ENCODE measurements at regions of chr16 and their contacts with region 1.

Region 1: GRCh38 chr16:425082-425718 is at the start of gene RAB11FIP3:
- DNase-seq: peak; percentile 67
- H3K4me3 ChIP-seq: peak within 1 kb of the TSS; percentile 54 to 82 (median 72)
- H3K27ac ChIP-seq: peak within 1 kb of the TSS; percentile 41
- H3K4me1 ChIP-seq: peaks cover 36% of the 10 kb centered on the region
- H3K27me3 ChIP-seq: no peaks in the 10 kb centered on the region
- CTCF ChIP-seq: peak in 1 of 2 donors; percentile 43
- total RNA-seq, gene RAB11FIP3: 14.2 to 30.4 TPM

Region 2: GRCh38 chr16:370443-370842 is 54.8 kb before region 1 on chr16 and contains the start of gene MRPL28:
- CTCF ChIA-PET with region 1: no interaction called
- dilution Hi-C with region 1: no loop called
- in situ Hi-C with region 1: no loop called
- intact Hi-C with region 1: no loop called
- DNase-seq: peak; percentile 92
- H3K4me3 ChIP-seq: peak within 1 kb of the TSS; percentile 28 to 50 (median 46)
- H3K27ac ChIP-seq: peak within 1 kb of the TSS; percentile 32
- H3K4me1 ChIP-seq: peaks cover 18% of the 10 kb centered on the region
- H3K27me3 ChIP-seq: no peaks in the 10 kb centered on the region
- CTCF ChIP-seq: no peak
- total RNA-seq, gene MRPL28: 49.8 to 83.9 TPM

Region 3: GRCh38 chr16:401468-402348 is 23.5 kb before region 1 on chr16 and contains the start of gene DECR2:
- CTCF ChIA-PET with region 1: interaction called, 3 read pairs
- dilution Hi-C with region 1: no loop called
- in situ Hi-C with region 1: no loop called
- intact Hi-C with region 1: loop called (anchors 1 kb)
- DNase-seq: peak; percentile 79
- H3K4me3 ChIP-seq: peak within 1 kb of the TSS; percentile 77 to 88 (median 80)
- H3K27ac ChIP-seq: peak within 1 kb of the TSS; percentile 38
- H3K4me1 ChIP-seq: peaks cover 6% of the 10 kb centered on the region
- H3K27me3 ChIP-seq: no peaks in the 10 kb centered on the region
- CTCF ChIP-seq: peak; percentile 7 to 58
- total RNA-seq, gene DECR2: 19.2 to 26.6 TPM

Region 4: DNA sequence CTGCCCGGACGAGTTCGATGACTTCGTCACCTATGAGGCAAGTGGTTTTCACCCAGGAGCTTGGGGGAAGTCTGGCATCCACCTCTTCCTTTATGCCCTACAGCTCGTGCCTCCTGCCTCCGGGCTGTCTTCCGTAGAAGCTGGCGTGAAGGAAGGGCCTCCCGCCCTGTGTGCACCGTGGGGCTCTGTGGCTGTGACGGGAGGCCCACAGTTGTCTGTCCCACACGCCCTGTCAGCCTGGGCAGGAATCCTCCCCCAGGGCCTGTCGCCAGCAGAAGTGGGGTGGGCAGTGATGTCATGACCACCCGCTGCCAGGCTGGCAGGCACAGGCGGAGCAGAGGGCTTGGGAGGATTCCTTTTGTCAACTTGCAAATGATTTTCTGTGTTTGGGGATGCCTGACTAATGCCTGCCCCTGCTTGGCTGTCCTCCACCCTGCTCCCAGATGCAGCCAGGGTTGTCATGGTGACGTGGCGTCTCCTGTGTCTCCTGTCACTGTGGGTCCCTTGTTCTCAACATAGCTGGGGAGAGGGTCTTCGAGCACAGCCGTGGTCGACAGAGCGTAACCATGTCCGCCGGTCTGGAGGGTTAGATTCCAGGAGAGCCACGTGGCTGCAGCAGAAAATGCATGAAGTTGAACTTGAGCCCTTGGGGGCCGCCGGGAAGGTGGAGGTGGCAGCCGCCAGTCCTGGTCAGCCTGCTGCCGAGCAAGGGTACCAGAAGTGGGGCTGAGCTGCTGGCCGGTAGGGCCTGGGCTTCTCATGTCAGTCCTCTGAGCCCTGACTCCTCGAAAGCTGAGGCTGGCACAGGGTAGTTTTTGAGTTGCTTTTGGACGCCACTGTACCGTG is 46.4 kb after region 1 on chr16:
- CTCF ChIA-PET with region 1: no interaction called
- dilution Hi-C with region 1: no loop called
- in situ Hi-C with region 1: no loop called
- intact Hi-C with region 1: no loop called
- DNase-seq: peak; percentile 73
- H3K4me3 ChIP-seq: peak overlapping the region in 1 of 3 experiments; percentile 18
- H3K27ac ChIP-seq: peak overlapping the region; percentile 34
- H3K4me1 ChIP-seq: peaks cover 17% of the 10 kb centered on the region
- H3K27me3 ChIP-seq: no peaks in the 10 kb centered on the region
- CTCF ChIP-seq: no peak

Region 5: GRCh38 chr16:489606-490005 is 64.4 kb after region 1 on chr16:
- CTCF ChIA-PET with region 1: no interaction called
- dilution Hi-C with region 1: no loop called
- in situ Hi-C with region 1: no loop called
- intact Hi-C with region 1: loop called (anchors 5 kb)
- DNase-seq: no peak
- H3K4me3 ChIP-seq: no peak overlapping the region
- H3K27ac ChIP-seq: no peak overlapping the region
- H3K4me1 ChIP-seq: no peaks in the 10 kb centered on the region
- H3K27me3 ChIP-seq: no peaks in the 10 kb centered on the region
- CTCF ChIP-seq: no peak

Region 6: GRCh38 chr16:527006-527753 is 102.0 kb after region 1 on chr16 and contains the start of gene CAPN15:
- CTCF ChIA-PET with region 1: no interaction called
- dilution Hi-C with region 1: no loop called
- in situ Hi-C with region 1: no loop called
- intact Hi-C with region 1: loop called (anchors 2 kb)
- DNase-seq: peak; percentile 86
- H3K4me3 ChIP-seq: peak within 1 kb of the TSS; percentile 70 to 88 (median 83)
- H3K27ac ChIP-seq: peak within 1 kb of the TSS; percentile 80
- H3K4me1 ChIP-seq: peaks cover 38% of the 10 kb centered on the region
- H3K27me3 ChIP-seq: no peaks in the 10 kb centered on the region
- CTCF ChIP-seq: peak in 1 of 2 donors; percentile 32
- total RNA-seq, gene CAPN15: 32.8 to 58.5 TPM

Measured in mammary epithelial cell (primary cell).